Activated T-helper 2 cell treated with anti-CD3 and anti-CD28 coated beads, Interferon-gamma antibody, Interleukin-2, Interleukin-4, amounts not matched to agents 10 μg/mL and 5 μg/mL and 100 μg/mL, durations not matched to agents 14 hours and 24 hours and 36 hours (primary cell): ENCODE measurements at regions of chr1 and their contacts with region 1.

Region 1: DNA sequence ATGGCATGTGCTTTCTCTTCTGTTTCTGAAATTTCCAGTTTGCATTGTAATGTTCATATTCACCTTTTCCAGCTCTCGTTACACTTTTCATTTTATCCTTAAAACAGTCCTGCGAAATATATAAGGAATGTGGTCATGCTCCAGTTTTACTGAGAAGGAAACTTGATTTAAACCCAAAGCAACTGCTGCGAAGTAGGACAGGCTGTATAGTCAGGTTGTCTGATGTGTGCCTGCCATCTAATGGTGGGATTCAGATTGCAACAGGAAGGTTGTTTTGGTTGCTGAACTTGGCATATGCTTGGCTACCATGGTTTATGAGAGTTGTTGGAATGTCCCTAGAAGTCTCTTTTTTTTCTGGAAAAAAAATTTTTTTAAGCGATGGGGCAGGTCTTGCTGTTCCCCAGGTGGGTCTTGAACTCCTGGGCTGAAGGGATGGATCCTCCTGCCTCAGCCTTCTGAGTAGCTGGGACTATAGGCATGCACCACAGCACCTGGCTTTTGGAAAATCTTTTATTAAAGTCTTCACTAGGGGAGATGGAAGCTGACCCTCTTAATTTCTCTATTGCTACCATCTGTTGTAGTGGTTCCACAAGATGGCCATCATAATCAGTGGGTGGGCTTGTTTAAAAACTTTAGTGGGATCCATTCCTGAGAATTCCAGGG is 86.9 kb downstream of the UCK2 start:
- DNase-seq: peak; percentile 56
- H3K4me3 Mint-ChIP-seq: no peak overlapping the region
- H3K27ac Mint-ChIP-seq: no peak overlapping the region
- H3K4me1 Mint-ChIP-seq: peaks cover 5% of the 10 kb centered on the region
- H3K27me3 Mint-ChIP-seq: no peaks in the 10 kb centered on the region

Region 2: GRCh38 chr1:165392634-165393571 is 521.4 kb before region 1 on chr1:
- intact Hi-C with region 1: loop called (anchors 10 kb)
- DNase-seq: peak; percentile 90
- H3K4me3 Mint-ChIP-seq: peak overlapping the region; percentile 31
- H3K27ac Mint-ChIP-seq: peak overlapping the region; percentile 64
- H3K4me1 Mint-ChIP-seq: peaks cover 23% of the 10 kb centered on the region
- H3K27me3 Mint-ChIP-seq: peaks cover 74% of the 10 kb centered on the region

Region 3: DNA sequence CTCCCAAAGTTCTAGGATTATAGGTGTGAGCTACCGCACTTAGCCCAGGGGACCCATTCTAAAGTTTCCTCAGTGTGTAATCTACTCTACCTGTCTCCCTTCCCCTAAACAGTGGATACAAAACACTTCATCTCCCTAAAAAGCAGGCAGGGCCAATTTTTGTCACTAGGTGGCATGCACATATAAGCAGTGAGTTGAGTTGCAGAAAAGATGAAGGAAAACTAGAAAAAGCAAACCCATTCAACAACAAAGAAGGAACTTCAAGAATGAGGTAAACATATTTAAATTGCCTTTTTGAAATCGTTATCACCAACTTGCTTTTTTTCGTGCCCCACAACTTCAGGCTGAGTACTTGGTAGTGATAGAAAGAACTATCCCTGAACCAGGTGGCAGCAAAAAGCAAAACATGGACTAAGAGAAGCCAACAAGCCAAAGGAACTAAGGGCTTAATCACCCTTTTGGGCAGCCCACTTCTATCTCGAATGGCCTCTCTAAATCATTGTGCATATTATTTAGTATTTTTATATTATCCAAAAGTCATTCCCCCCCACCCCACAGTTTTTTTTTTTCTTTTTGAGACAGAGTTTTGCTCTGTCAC is 196.2 kb before region 1 on chr1:
- intact Hi-C with region 1: loop called (anchors 1 kb)
- DNase-seq: peak; percentile 16
- H3K4me3 Mint-ChIP-seq: no peak overlapping the region
- H3K27ac Mint-ChIP-seq: no peak overlapping the region
- H3K4me1 Mint-ChIP-seq: no peaks in the 10 kb centered on the region
- H3K27me3 Mint-ChIP-seq: no peaks in the 10 kb centered on the region